ENCODE measurements at regions of chr1 and their contacts with region 1.

Region 1: DNA sequence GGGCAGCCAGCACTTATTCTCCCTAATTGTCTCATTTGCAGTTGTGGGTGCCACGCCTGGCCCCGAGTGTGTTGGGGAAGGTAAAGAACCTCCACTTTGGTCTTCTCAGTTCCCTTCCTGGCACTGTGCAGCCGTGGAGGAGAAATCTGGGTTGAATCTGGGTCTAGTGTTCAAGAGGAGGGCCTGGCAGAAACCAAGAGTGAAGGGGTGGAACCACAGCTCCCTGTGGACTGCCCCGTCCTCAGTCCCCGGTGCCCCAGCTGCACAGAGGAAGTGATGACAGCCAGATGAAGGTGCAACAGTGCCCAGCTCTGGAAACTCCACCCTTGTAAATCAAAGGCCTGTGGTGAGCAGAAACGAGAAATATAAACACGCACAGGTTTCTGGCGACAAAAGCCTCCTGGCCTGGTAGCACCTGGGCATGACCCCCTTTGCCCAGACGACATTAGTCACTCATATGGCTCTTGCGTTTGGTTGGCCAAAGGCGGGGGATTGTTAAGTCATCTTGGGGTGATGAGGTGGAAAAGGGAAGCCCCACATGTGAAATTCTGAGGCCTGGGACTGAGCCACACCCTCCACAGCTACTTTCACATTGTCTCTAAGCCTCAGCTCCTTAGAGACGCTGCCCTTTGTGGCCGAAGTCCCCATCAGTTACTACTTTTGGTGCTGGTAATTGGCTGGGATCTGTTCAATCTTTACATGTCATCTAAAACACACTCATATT is 4.2 kb upstream of the ECE1 start:
- DNase-seq: peak; percentile 93 to 99 (median 97)
- H3K4me3 ChIP-seq: peak overlapping the region; percentile 79 to 81
- H3K4me3 Mint-ChIP-seq: peak overlapping the region; percentile 86 to 99 (median 94)
- H3K27ac ChIP-seq: peak overlapping the region; percentile 99
- H3K27ac Mint-ChIP-seq: peak overlapping the region; percentile 96 to 100 (median 99)
- H3K4me1 ChIP-seq: peaks cover 84% of the 10 kb centered on the region
- H3K4me1 Mint-ChIP-seq: peaks cover 42 to 95% (median 69%) of the 10 kb centered on the region in 4 donors
- H3K27me3 ChIP-seq: no peaks in the 10 kb centered on the region
- H3K27me3 Mint-ChIP-seq: no peaks in the 10 kb centered on the region

Region 2: DNA sequence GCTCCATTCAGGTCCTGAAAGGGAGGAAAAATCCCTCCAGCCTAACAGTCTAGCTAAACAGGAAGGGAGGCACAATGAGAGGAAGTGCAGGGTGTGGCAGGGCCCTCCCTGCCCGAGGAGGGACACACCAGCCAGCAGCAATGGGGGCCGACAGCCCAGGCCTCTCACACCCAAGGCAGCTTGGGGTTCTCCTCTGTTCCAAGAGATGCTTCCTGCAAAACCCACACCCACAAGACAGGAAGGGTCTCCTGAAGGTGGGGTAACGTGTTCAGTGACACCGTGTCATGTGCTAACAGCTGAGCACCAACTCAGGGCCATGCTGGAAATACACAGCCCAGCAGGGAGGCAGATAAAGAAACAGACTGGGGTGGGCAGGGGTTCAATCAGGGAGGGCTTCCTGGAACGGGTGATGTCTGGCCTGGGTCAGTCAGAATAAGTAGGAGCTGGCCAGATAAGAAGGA is 14.4 kb before region 1 on chr1:
- CTCF ChIA-PET with region 1: interaction called, 20 read pairs
- POLR2A ChIA-PET with region 1: interaction called, 201 read pairs
- intact Hi-C with region 1: loop called (anchors 1 kb)
- DNase-seq: no peak
- H3K4me3 ChIP-seq: peak overlapping the region in 1 of 2 donors; percentile 17
- H3K4me3 Mint-ChIP-seq: peak overlapping the region; percentile 76 to 90 (median 82)
- H3K27ac ChIP-seq: peak overlapping the region; percentile 61
- H3K27ac Mint-ChIP-seq: peak overlapping the region; percentile 95 to 99 (median 98)
- H3K4me1 ChIP-seq: peaks cover 43% of the 10 kb centered on the region
- H3K4me1 Mint-ChIP-seq: peaks cover 36 to 65% (median 51%) of the 10 kb centered on the region in 4 donors
- H3K27me3 ChIP-seq: no peaks in the 10 kb centered on the region
- H3K27me3 Mint-ChIP-seq: no peaks in the 10 kb centered on the region

Region 3: GRCh38 chr1:21308847-21309652 is 14.6 kb after region 1 on chr1:
- CTCF ChIA-PET with region 1: interaction called, 18 read pairs
- POLR2A ChIA-PET with region 1: interaction called, 68 read pairs
- intact Hi-C with region 1: no loop called
- DNase-seq: no peak
- H3K4me3 ChIP-seq: no peak overlapping the region
- H3K4me3 Mint-ChIP-seq: peak overlapping the region in 1 of 8 donors; percentile 30
- H3K27ac ChIP-seq: no peak overlapping the region
- H3K27ac Mint-ChIP-seq: peak overlapping the region in 6 of 7 donors; percentile 52 to 76 (median 70)
- H3K4me1 ChIP-seq: peaks cover 69% of the 10 kb centered on the region
- H3K4me1 Mint-ChIP-seq: peaks cover 46 to 74% (median 62%) of the 10 kb centered on the region in 4 donors
- H3K27me3 ChIP-seq: no peaks in the 10 kb centered on the region
- H3K27me3 Mint-ChIP-seq: no peaks in the 10 kb centered on the region

Region 4: DNA sequence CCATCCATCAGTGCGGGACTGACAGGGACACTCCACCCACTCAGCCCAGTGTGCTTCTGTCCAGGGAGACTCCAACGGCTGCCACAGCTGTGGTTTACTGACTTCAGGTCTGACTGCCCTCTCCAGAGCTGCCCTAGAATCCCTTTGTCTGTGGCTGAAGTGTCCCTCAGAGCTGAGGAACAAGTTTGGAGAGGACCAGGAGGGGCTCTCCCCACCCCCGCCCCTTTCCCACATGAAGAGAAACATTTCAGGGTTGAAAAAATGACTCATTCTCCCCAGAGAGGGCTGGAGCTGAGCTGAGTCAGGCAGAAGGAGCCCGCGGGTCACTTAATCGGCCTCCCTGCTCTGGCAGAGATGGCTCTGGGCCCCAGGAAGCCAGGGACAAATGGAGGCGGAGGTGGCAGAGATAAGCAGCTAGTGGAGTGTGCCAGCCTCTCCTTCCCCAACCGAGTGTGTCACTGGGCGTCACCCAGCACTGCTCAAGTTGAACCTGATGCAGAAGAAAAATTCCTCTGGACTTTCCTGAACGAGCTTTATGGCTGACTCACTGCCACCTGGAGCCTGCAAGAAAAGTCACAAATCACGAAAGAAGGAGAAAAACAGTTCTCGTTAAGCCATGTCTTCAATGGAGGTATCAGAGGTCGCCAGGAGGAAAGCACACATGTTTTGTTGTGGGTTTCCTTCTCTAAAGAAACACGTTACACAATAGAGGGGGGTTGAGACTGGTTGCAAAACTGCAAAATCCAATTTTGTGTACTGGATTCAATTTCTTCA is 30.1 kb after region 1 on chr1:
- CTCF ChIA-PET with region 1: interaction called, 53 read pairs
- POLR2A ChIA-PET with region 1: interaction called, 309 read pairs
- intact Hi-C with region 1: loop called (anchors 1 kb)
- DNase-seq: peak; percentile 24 to 82 (median 48)
- H3K4me3 ChIP-seq: peak overlapping the region; percentile 9 to 25
- H3K4me3 Mint-ChIP-seq: peak overlapping the region; percentile 65 to 93 (median 84)
- H3K27ac ChIP-seq: peak overlapping the region; percentile 36
- H3K27ac Mint-ChIP-seq: peak overlapping the region; percentile 92 to 96 (median 94)
- H3K4me1 ChIP-seq: peaks cover 71% of the 10 kb centered on the region
- H3K4me1 Mint-ChIP-seq: peaks cover 41 to 95% (median 75%) of the 10 kb centered on the region in 4 donors
- H3K27me3 ChIP-seq: no peaks in the 10 kb centered on the region
- H3K27me3 Mint-ChIP-seq: no peaks in the 10 kb centered on the region

Region 5: GRCh38 chr1:21334214-21335087 is 40.0 kb after region 1 on chr1:
- CTCF ChIA-PET with region 1: interaction called, 54 read pairs
- POLR2A ChIA-PET with region 1: interaction called, 267 read pairs
- intact Hi-C with region 1: loop called (anchors 1 kb)
- DNase-seq: peak; percentile 87 to 93 (median 89)
- H3K4me3 ChIP-seq: peak overlapping the region; percentile 17 to 44
- H3K4me3 Mint-ChIP-seq: peak overlapping the region; percentile 80 to 94 (median 90)
- H3K27ac ChIP-seq: peak overlapping the region; percentile 82
- H3K27ac Mint-ChIP-seq: peak overlapping the region; percentile 92 to 99 (median 98)
- H3K4me1 ChIP-seq: peaks cover 94% of the 10 kb centered on the region
- H3K4me1 Mint-ChIP-seq: peaks cover 62 to 98% (median 81%) of the 10 kb centered on the region in 4 donors
- H3K27me3 ChIP-seq: no peaks in the 10 kb centered on the region
- H3K27me3 Mint-ChIP-seq: no peaks in the 10 kb centered on the region

Region 6: DNA sequence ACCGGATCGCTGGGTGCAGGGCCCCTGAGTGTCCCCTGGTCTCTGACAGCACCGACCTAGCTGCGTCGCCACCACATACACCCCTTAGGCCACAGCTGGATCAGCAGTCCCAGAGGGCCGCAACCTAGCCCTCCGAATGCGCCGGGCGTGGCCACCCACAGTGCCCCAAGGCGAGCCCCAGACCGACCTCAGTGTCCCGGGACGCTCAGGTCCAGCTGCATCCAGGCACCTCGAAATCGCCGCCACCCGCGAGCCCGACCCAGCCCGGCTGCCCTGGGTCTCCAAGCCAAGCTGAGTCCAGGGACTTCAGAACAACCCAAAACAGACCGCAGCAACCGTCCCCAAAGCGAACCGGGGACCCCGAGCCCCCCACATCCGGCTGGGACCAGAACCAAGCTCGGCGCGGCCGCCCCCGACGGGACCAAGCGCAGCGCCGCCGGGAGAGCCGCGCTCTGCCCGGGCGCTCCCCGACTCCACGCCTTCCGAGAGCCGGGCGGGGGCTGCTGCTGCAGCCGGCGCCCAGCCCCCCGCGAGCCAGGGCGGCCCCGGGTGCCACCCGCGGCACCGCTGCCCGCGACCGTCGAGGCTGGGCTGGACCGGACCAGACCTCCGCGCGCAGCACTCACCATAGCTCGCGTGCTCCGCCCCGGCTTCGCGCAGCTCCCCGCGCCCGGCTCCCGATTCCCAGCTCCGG is 50.5 kb after region 1 on chr1:
- CTCF ChIA-PET with region 1: interaction called, 9 read pairs
- POLR2A ChIA-PET with region 1: interaction called, 267 read pairs
- intact Hi-C with region 1: loop called (anchors 1 kb)
- DNase-seq: peak in 1 of 5 donors; percentile 48
- H3K4me3 ChIP-seq: peak overlapping the region; percentile 57 to 80
- H3K4me3 Mint-ChIP-seq: peak overlapping the region; percentile 79 to 92 (median 90)
- H3K27ac ChIP-seq: peak overlapping the region; percentile 59
- H3K27ac Mint-ChIP-seq: peak overlapping the region; percentile 85 to 93 (median 90)
- H3K4me1 ChIP-seq: peaks cover 53% of the 10 kb centered on the region
- H3K4me1 Mint-ChIP-seq: peaks cover 31 to 48% (median 40%) of the 10 kb centered on the region in 4 donors
- H3K27me3 ChIP-seq: no peaks in the 10 kb centered on the region
- H3K27me3 Mint-ChIP-seq: no peaks in the 10 kb centered on the region

Measured in CD4-positive, alpha-beta memory T cell (primary cell).